GM10248 (cell line): ENCODE measurements at regions of chr22 and their contacts with region 1.

Region 1: DNA sequence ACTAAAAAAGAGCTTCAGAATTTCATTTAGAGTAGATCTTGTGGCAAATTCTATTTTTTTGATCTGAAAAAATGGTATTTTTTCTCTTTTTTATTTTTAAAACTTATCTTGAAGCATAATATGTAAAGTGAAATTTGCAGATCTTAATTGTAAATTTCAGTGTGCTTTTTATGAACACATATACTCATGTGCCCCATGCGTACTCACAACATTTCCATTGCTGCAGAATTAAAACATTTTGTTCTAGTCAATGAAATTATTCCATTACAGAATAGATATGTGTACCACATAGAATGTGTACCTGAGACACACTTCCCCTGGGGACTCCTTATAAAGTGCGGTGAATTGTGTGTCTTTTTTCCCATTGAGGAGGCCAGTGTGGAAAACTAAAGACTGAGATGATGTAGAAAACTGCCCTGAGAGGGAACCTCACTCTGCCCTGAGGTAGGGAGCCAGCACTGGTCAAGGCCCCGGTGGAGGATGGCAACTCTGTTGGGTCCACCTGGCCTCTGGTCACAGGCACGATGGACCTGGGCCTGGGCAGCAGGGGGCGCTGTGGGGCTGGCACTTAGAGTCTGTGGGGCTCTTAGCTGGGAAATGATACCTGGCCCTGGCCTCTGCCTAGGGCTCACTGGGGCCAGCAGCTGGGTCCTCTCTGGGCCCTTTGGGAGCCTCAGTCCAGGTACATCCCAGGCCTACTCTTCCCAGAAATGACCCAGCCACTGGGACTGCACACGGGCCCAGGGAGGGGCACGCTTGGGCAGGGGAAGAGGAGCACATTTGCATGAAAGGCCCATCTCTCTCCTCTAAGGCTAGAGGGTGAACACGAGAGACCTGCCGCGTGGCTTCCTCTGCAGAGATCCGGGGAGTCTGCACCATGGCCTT is 77.9 kb upstream of the TOP3B start:
- DNase-seq: peak; percentile 89
- CTCF ChIP-seq: peak; percentile 93

Region 2: GRCh38 chr22:21978564-21979386 is 81.7 kb before region 1 on chr22:
- CTCF ChIA-PET with region 1: no interaction called
- POLR2A ChIA-PET with region 1: no interaction called
- DNase-seq: no peak
- CTCF ChIP-seq: no peak

Region 3: GRCh38 chr22:22030493-22031182 is 29.8 kb before region 1 on chr22:
- CTCF ChIA-PET with region 1: interaction called, 17 read pairs
- POLR2A ChIA-PET with region 1: no interaction called
- DNase-seq: peak; percentile 83
- CTCF ChIP-seq: peak; percentile 74

Region 4: DNA sequence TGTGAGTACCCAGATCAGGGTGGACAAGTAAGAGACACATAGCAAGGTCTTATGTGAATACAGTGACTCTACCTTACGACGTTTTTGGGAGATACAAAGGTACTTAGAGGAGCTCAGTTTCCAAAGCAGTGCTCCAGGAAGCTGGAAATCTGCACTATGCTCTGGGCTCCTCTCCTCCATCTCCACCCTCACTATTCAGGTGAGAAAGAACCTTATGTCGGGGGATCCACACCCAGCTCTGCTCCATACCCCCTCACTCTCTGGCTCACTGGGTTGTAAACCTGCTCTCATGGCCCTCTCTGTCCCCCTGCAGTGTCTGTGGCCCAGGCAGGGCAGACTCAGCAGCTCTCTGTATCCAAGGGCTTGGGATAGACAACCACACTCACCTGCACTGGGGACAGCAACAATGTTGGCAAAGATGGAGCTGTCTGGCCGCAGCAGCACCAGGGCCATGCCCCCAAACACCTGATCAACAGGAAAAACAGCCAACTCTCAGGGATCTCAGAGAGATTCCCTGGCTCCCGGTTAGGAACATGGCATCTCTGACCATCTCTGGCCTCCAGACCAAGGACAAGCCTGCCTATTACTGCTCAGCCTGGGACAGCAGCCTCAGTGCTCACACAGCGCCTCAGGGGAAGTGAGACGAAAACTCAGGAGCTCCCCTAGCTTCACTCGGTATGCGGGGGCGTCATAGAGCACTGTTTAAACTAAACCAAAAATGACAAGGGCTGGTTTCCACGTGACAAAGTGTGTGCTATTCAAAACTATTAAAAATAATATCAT is 17.0 kb before region 1 on chr22:
- CTCF ChIA-PET with region 1: interaction called, 80 read pairs
- POLR2A ChIA-PET with region 1: no interaction called
- DNase-seq: peak; percentile 67
- CTCF ChIP-seq: no peak

Region 5: GRCh38 chr22:22085702-22086500 is 25.5 kb after region 1 on chr22:
- CTCF ChIA-PET with region 1: interaction called, 28 read pairs
- POLR2A ChIA-PET with region 1: no interaction called
- DNase-seq: no peak
- CTCF ChIP-seq: no peak

Region 6: DNA sequence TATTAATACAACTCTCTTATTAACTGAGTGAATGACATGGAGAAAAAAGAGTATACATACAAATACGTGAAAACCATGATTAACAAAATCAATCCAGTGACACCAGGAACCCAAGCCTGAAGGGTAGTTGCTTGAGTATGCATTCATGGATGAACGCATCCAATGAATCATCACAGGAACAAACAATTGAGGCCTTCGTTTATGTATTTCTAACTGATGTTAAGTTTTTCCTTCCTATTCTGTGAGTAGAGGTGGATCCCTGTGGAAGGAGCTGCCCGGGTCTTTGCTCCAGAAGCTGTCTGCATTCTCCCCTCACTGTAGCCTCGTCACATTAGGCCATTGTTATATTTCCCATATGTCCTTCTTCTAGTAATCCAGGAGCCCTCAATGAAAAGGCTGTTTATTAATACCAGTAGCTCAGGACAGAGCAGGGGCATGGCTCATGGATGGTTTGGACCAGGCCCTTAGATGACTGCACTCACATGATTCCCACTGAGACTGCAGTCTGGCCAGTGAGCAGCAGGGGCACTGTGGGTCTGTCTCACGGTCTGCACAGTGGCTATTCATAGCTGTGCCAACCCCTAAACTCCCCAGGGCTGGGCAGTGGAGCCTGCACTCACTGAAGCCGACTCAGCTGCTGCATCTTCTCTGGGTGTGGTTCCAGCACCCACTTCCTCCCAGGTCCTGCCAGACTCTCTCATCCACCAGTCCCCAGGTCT is 50.3 kb after region 1 on chr22:
- CTCF ChIA-PET with region 1: interaction called, 14 read pairs
- POLR2A ChIA-PET with region 1: no interaction called
- DNase-seq: peak; percentile 87
- CTCF ChIP-seq: peak; percentile 56

Region 7: GRCh38 chr22:22195265-22196017 is 135.0 kb after region 1 on chr22:
- CTCF ChIA-PET with region 1: interaction called, 16 read pairs
- POLR2A ChIA-PET with region 1: no interaction called
- DNase-seq: peak; percentile 87
- CTCF ChIP-seq: peak; percentile 91